ENCODE measurements at regions of chrX and their contacts with region 1.

Region 1: GRCh38 chrX:113935518-113935917 is 648.4 kb upstream of the HTR2C start:
- DNase-seq: no peak
- H3K4me3 ChIP-seq: no peak overlapping the region
- H3K27ac ChIP-seq: no peak overlapping the region
- H3K4me1 ChIP-seq: no peaks in the 10 kb centered on the region
- H3K27me3 ChIP-seq: no peaks in the 10 kb centered on the region
- CTCF ChIP-seq: no peak
- EP300 ChIP-seq: no peak
- POLR2A ChIP-seq: no peak

Region 2: GRCh38 chrX:113833096-113834045 is 102.1 kb before region 1 on chrX:
- in situ Hi-C with region 1: no loop called
- intact Hi-C with region 1: no loop called
- DNase-seq: no peak
- H3K4me3 ChIP-seq: no peak overlapping the region
- H3K27ac ChIP-seq: no peak overlapping the region
- H3K4me1 ChIP-seq: no peaks in the 10 kb centered on the region
- H3K27me3 ChIP-seq: no peaks in the 10 kb centered on the region
- CTCF ChIP-seq: no peak
- EP300 ChIP-seq: no peak
- POLR2A ChIP-seq: no peak

Region 3: DNA sequence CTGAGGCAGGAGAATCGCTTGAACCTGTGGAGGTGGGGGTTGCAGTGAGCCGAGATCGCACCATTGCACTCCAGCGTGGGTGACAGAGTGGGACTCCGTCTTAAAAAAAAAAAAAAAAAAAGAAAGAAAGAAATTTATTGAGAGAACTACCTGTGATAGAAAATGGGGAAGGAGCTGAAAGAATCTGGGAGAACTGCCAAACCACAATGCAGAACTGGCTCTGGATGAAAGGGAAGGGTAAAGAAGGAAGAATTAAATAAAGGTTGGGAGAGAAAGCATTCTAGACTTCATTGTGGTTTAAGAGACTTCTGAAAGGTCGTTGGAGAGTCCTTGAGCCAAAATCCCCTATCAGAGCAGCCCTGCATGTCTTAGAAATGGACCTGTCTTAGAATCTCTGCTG is 80.4 kb after region 1 on chrX:
- in situ Hi-C with region 1: no loop called
- intact Hi-C with region 1: no loop called
- DNase-seq: no peak
- H3K4me3 ChIP-seq: no peak overlapping the region
- H3K27ac ChIP-seq: no peak overlapping the region
- H3K4me1 ChIP-seq: no peaks in the 10 kb centered on the region
- H3K27me3 ChIP-seq: no peaks in the 10 kb centered on the region
- CTCF ChIP-seq: no peak
- EP300 ChIP-seq: no peak
- POLR2A ChIP-seq: no peak

Region 4: GRCh38 chrX:114075073-114075673 is 139.7 kb after region 1 on chrX:
- in situ Hi-C with region 1: loop called in 1 of 4 experiments (anchors 10 kb)
- intact Hi-C with region 1: no loop called
- DNase-seq: no peak
- H3K4me3 ChIP-seq: no peak overlapping the region
- H3K27ac ChIP-seq: no peak overlapping the region
- H3K4me1 ChIP-seq: no peaks in the 10 kb centered on the region
- H3K27me3 ChIP-seq: no peaks in the 10 kb centered on the region
- CTCF ChIP-seq: peak in 2 of 5 experiments; percentile 17 to 27
- EP300 ChIP-seq: no peak
- POLR2A ChIP-seq: no peak

Measured in transverse colon (tissue), 4 donors.